ENCODE measurements at regions of chr17 and their contacts with region 1.

Region 1: DNA sequence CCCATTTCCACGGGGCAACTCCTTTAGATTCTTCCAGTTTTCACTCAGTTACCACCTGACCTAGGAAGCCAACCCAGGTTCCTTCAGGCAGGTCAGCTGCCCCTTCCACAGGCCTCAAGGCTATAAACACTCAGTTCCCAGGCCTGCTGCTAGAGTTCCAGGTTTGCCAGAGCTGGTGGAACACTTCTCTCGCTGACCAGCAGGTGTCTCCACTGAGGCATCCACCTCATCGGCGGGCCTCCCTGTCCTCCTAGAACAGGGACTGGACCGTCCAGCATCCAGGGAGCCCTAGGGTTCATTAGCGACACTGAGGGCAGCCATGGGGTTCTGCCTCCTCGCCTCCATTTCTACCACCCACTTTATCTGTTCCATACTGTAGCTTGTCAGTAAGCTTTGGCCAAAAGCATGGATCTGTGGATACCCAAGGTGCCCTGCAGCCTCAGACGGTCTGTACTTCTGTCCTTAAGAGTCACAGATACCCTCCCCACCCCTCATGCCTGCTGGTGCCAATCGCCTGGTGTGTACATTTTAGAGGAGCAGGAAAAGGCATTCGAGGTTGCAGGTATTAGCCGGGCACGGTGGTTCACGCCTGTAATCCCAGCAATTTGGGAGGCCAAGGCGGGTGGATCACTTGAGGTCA is 29.0 kb downstream of the PIMREG start:
- DNase-seq: peak; percentile 81 to 98
- ATAC-seq: peak; percentile 78 to 93
- H3K4me3 ChIP-seq: no peak overlapping the region
- H3K27ac ChIP-seq: peak overlapping the region; percentile 53 to 76; a peak in 5 of 6 replicates
- H3K4me1 ChIP-seq: peaks cover 24% of the 10 kb centered on the region
- CTCF ChIP-seq: peak; percentile 95
- EP300 ChIP-seq: no peak
- POLR2A ChIP-seq: no peak
- RAD21 ChIP-seq: peak; percentile 93

Region 2: DNA sequence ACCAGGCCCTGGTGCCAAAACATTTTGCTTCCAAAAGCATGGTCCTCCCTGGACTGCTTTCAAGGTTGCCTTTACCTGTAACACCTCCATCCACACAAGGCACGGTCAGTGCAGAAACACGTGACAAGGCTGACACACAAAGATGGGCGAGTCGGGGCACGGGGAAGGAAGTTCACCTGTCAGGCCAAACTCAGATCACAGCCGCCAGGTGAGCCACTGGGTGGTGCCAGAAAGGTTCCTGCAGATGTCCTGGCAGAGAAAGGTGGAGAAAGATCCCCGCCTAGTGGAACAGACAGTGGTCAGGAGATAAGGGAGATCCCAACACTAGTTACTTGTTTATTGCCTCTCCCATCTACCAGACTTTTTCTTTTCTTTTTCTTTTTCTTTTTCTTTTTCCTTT is 193.6 kb before region 1 on chr17:
- CTCF ChIA-PET with region 1: no interaction called
- POLR2A ChIA-PET with region 1: no interaction called
- DNase-seq: peak in 1 of 2 experiments; percentile 51
- ATAC-seq: peak in 1 of 2 experiments; percentile 72; a peak in 3 of 6 replicates
- H3K4me3 ChIP-seq: no peak overlapping the region
- H3K27ac ChIP-seq: no peak overlapping the region
- H3K4me1 ChIP-seq: no peaks in the 10 kb centered on the region
- CTCF ChIP-seq: peak; percentile 51
- EP300 ChIP-seq: no peak
- POLR2A ChIP-seq: no peak
- RAD21 ChIP-seq: peak; percentile 68 to 88; a peak in 4 of 5 replicates

Region 3: DNA sequence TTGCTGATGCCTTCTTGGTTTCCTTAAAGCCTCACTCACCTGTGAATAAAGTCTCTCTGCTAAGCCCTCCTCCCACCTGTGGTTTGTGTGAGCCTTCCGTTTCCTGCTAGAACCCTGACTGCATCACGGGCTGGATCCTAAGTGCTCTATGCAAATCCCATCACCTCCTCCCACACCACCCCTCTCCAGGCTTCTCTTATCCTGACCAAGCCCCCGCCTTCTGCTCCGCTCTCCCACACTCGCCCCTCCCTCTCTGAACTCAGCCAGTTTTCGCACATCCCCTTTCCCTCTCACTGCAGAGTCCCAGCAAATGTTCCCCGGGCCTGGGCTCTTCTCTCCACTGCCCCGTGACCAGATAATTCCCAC is 22.9 kb after region 1 on chr17:
- CTCF ChIA-PET with region 1: interaction called, 32 read pairs
- POLR2A ChIA-PET with region 1: no interaction called
- DNase-seq: no peak
- ATAC-seq: no peak; a peak in 1 of 6 replicates
- H3K4me3 ChIP-seq: no peak overlapping the region
- H3K27ac ChIP-seq: no peak overlapping the region
- H3K4me1 ChIP-seq: no peaks in the 10 kb centered on the region
- CTCF ChIP-seq: no peak
- EP300 ChIP-seq: no peak
- POLR2A ChIP-seq: no peak
- RAD21 ChIP-seq: no peak

Region 4: DNA sequence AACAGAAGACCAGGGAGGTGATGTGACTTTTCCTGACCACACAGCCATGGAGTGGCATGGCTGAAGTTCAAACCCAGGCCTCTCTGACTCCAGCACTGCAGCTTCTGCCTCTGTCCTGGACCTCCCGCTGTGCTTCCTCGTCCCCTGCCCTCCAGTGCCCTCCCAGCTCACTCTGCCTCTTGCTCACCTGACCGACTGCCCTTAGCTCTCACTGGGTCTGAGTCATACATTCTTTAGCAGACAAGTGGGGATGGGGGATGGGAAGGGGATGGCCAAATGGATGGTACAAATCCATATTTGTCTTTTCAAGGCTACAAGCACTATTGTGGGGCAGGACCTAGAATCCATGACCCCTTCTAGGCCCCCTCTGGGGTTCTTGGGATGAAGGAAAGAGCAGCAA is 50.1 kb after region 1 on chr17:
- CTCF ChIA-PET with region 1: interaction called, 65 read pairs
- POLR2A ChIA-PET with region 1: no interaction called
- DNase-seq: peak; percentile 68 to 74
- ATAC-seq: peak; percentile 75 to 78
- H3K4me3 ChIP-seq: 0 out of 3 replicates have a peak overlapping the region, but pooled peaks have one; percentile 10
- H3K27ac ChIP-seq: peak overlapping the region; percentile 69 to 89
- H3K4me1 ChIP-seq: peaks cover 27% of the 10 kb centered on the region
- CTCF ChIP-seq: no peak
- EP300 ChIP-seq: no peak; a peak in 1 of 5 replicates
- POLR2A ChIP-seq: no peak
- RAD21 ChIP-seq: peak in 1 of 2 experiments; percentile 18; a peak in 1 of 5 replicates

Region 5: GRCh38 chr17:6567529-6568183 is 94.4 kb after region 1 on chr17:
- CTCF ChIA-PET with region 1: interaction called, 46 read pairs
- POLR2A ChIA-PET with region 1: no interaction called
- DNase-seq: no peak
- ATAC-seq: peak; percentile 35 to 46; a peak in 4 of 6 replicates
- H3K4me3 ChIP-seq: no peak overlapping the region
- H3K27ac ChIP-seq: peak overlapping the region in 1 of 2 experiments; percentile 25; a peak in 2 of 6 replicates
- H3K4me1 ChIP-seq: 0 out of 3 replicates have a peak, but pooled peaks cover 8% of the 10 kb centered on the region
- CTCF ChIP-seq: no peak
- EP300 ChIP-seq: no peak
- POLR2A ChIP-seq: no peak
- RAD21 ChIP-seq: no peak

Region 6: DNA sequence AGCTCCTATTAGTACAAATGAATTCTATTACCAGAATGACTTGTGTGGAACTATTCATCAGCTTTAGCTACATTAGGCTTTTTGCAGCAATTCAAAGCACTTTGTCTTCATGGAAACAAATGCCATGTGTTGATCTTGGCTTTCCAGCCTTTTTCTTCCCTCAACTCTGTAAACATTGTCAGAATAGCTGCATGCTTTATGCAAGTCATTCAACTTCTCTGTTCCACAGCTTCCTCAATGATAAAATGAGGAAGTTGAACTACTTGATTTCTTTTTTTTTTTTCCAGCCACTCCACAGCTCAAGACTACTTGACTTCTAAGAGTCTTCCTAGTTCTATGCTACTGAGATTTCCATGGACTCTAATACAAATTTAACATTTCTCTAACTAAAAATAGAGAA is 126.1 kb after region 1 on chr17:
- CTCF ChIA-PET with region 1: interaction called, 25 read pairs
- POLR2A ChIA-PET with region 1: no interaction called
- DNase-seq: peak in 1 of 2 experiments; percentile 55
- ATAC-seq: peak in 1 of 2 experiments; percentile 55; a peak in 3 of 6 replicates
- H3K4me3 ChIP-seq: no peak overlapping the region
- H3K27ac ChIP-seq: peak overlapping the region; percentile 3 to 39; a peak in 2 of 6 replicates
- H3K4me1 ChIP-seq: peaks cover 42% of the 10 kb centered on the region
- CTCF ChIP-seq: no peak
- EP300 ChIP-seq: no peak
- POLR2A ChIP-seq: no peak
- RAD21 ChIP-seq: no peak

Region 7: GRCh38 chr17:6640536-6641373 is 167.5 kb after region 1 on chr17 and contains the starts of genes KIAA0753 and TXNDC17:
- CTCF ChIA-PET with region 1: interaction called, 42 read pairs
- POLR2A ChIA-PET with region 1: interaction called, 6 read pairs
- DNase-seq: peak; percentile 85 to 94
- ATAC-seq: peak; percentile 89 to 93
- H3K4me3 ChIP-seq: peak within 1 kb of the TSS; percentile 81
- H3K27ac ChIP-seq: peak within 1 kb of the TSS; percentile 94 to 97
- H3K4me1 ChIP-seq: peaks cover 22% of the 10 kb centered on the region
- CTCF ChIP-seq: no peak
- EP300 ChIP-seq: no peak
- POLR2A ChIP-seq: peak; percentile 99
- RAD21 ChIP-seq: 0 out of 5 replicates have a peak, but pooled peaks of 1 of the 2 experiments have one; percentile 22
- polyA plus RNA-seq, gene KIAA0753: 15.2 and 21.5 TPM in 2 replicates
- polyA plus RNA-seq, gene TXNDC17: 517 and 572 TPM in 2 replicates